Astrocyte of the cerebellum (primary cell): ENCODE measurements at regions of chr1 and their contacts with region 1.

Region 1: DNA sequence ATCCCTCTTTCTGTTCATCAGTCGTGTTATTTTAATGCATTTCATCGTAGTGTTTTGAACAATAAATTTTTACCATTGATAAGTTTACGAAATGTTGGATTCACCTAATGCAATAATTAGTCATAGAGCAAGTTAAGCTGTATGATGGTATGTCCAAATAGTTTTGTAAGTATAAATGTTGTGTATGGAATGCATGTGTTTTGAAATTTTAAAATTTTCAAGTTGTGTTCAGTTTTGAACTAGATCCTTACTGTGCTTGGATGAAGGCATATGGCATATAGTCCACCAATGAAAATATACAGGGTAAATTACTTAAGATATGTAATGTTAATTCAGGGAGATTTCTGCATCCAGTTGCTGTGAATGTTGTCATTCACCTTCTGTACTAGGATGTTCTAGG is 2.3 kb downstream of the ZMYM4 start:
- DNase-seq: no peak
- H3K4me3 ChIP-seq: no peak overlapping the region
- CTCF ChIP-seq: no peak

Region 2: GRCh38 chr1:35180776-35181374 is 90.0 kb before region 1 on chr1:
- in situ Hi-C with region 1: loop called (anchors 5 kb)
- DNase-seq: no peak
- H3K4me3 ChIP-seq: no peak overlapping the region
- CTCF ChIP-seq: no peak